Activated CD8-positive, alpha-beta T cell treated with anti-CD3 and anti-CD28 coated beads for 36 hours (primary cell): ENCODE measurements at regions of chr3 and their contacts with region 1.

Region 1: GRCh38 chr3:57169872-57170623 is 4.9 kb upstream of the IL17RD start:
- DNase-seq: peak; percentile 79
- ATAC-seq: peak; percentile 80
- H3K4me3 Mint-ChIP-seq: peak overlapping the region; percentile 58
- H3K27ac Mint-ChIP-seq: no peak overlapping the region
- H3K4me1 Mint-ChIP-seq: peaks cover 6% of the 10 kb centered on the region
- H3K27me3 Mint-ChIP-seq: peaks cover 45% of the 10 kb centered on the region
- CTCF ChIP-seq: peak; percentile 97

Region 2: DNA sequence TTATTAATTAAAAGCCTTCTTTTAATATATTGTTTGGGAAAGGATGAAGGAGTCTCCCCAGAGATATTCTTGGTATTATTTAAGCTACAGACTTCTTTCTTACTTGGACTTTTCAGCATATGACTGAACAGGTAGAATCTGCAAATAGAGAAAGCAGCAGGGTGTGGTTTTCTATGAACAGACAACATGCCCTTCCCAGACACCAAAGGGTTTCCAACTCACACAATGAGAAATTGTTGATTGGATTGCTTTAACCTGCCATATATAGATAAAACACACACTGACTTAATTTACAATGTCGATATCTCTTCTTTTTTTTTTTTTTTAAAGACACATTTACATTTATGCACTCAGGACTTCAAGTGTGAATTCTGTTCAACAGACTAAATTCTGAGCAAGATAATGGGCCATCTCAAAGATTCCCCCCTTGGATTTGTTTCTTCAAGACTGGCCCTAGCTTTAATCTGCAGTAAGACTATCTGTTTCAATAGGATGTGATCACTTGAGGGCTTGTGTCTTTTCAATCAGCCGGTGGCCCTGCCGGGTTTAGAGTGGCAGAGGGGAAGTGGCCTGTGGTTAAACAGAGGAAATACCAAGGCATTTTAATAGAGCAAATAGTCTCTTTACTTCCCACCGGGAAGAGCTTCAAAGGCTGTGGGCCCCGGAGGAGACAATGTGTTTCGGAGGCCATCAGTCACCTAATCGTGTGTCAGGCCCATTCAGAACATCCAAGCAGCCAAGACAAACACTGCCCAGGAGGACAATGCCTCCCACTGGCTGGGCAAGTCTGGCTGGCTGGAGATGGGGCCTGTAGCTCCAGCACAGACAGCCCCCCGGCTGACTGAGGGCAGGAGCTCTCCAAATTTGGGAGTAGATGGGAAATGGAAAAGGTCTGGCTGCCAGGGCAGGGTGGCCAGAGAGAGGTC is 11.0 kb before region 1 on chr3:
- CTCF ChIA-PET with region 1: interaction called, 16 read pairs
- POLR2A ChIA-PET with region 1: interaction called, 3 read pairs
- intact Hi-C with region 1: no loop called
- DNase-seq: peak; percentile 38
- ATAC-seq: peak; percentile 45
- H3K4me3 Mint-ChIP-seq: no peak overlapping the region
- H3K27ac Mint-ChIP-seq: no peak overlapping the region
- H3K4me1 Mint-ChIP-seq: peaks cover 12% of the 10 kb centered on the region
- H3K27me3 Mint-ChIP-seq: peaks cover 56% of the 10 kb centered on the region
- CTCF ChIP-seq: no peak

Region 3: DNA sequence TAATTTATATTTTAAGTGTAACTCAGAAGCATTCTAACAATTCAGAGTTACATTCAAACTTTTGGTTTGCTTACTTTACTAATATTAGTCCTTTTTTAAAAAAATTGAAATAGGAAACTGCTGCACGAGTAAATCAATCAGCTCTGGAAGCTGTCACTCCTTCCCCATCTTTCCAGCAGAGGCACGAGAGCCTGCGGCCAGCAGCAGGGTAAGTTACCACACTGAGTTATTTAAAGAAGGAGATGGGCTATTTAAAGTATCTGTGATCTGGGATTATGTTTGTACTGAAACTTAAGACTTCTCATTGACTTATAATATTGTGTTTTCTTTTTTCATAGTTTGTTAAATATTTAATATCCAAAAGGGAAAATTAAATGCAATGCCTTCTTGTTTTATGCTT is 86.8 kb after region 1 on chr3:
- CTCF ChIA-PET with region 1: no interaction called
- POLR2A ChIA-PET with region 1: no interaction called
- intact Hi-C with region 1: no loop called
- DNase-seq: no peak
- ATAC-seq: no peak
- H3K4me3 Mint-ChIP-seq: no peak overlapping the region
- H3K27ac Mint-ChIP-seq: no peak overlapping the region
- H3K4me1 Mint-ChIP-seq: no peaks in the 10 kb centered on the region
- H3K27me3 Mint-ChIP-seq: no peaks in the 10 kb centered on the region
- CTCF ChIP-seq: no peak